ENCODE measurements at regions of chr19 and their contacts with region 1.

Region 1: DNA sequence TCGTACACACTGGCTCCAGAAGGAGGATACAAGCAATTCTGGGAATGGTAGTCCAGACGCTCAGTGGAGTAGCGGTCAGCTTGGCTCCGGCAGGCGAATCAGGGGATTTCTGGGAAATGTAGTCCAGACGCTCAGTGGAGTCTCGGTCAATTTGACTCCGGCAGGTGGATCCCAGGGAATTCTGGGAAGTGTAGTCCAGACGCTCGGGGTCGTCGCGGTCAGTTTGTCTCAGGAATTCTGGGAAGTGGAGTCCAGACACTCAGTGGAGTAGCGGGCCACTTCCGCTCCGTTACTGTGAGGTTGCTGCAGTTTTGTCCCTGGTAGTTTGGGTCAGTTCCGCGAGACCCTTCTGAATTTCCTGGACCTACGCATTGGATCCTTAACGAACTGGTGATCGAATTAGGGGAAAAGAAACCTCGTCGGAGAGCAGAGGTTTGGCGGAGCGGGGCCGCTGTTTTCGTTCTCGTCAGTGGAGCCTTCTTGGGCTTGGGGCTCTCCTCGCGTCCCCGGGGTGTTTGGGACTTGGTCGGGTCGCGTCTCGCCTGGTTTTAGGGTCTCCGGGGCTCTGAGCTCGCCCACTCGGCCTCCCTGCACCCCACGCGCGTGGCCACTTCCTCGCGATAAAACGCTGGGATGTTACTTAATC is at the start of gene ZNF225:
- DNase-seq: peak; percentile 64 to 95 (median 83)
- ATAC-seq: peak; percentile 97
- H3K4me3 ChIP-seq: peak within 1 kb of the TSS; percentile 80 to 92
- H3K4me3 Mint-ChIP-seq: peak within 1 kb of the TSS; percentile 99
- H3K27ac ChIP-seq: peak within 1 kb of the TSS; percentile 40 to 64
- H3K27ac Mint-ChIP-seq: peak within 1 kb of the TSS; percentile 93
- H3K4me1 ChIP-seq: peaks cover 14% of the 10 kb centered on the region
- H3K4me1 Mint-ChIP-seq: peaks cover 34% of the 10 kb centered on the region
- H3K27me3 ChIP-seq: no peaks in the 10 kb centered on the region
- H3K27me3 Mint-ChIP-seq: no peaks in the 10 kb centered on the region
- CTCF ChIP-seq: no peak
- total RNA-seq, gene ZNF225: 1.3 to 1.6 TPM

Region 2: GRCh38 chr19:43826787-43827754 is 286.2 kb before region 1 on chr19 and contains the start of gene ZNF283:
- CTCF ChIA-PET with region 1: no interaction called
- POLR2A ChIA-PET with region 1: no interaction called
- intact Hi-C with region 1: loop called (anchors 1 to 2 kb)
- DNase-seq: peak; percentile 64 to 90 (median 81)
- ATAC-seq: peak; percentile 92
- H3K4me3 ChIP-seq: peak within 1 kb of the TSS; percentile 52 to 69
- H3K4me3 Mint-ChIP-seq: peak within 1 kb of the TSS; percentile 88
- H3K27ac ChIP-seq: no peak within 1 kb of the TSS
- H3K27ac Mint-ChIP-seq: peak within 1 kb of the TSS; percentile 39
- H3K4me1 ChIP-seq: peaks cover 12% of the 10 kb centered on the region
- H3K4me1 Mint-ChIP-seq: peaks cover 22% of the 10 kb centered on the region
- H3K27me3 ChIP-seq: no peaks in the 10 kb centered on the region
- H3K27me3 Mint-ChIP-seq: peaks cover 8% of the 10 kb centered on the region
- CTCF ChIP-seq: no peak
- total RNA-seq, gene ZNF283: 1.3 to 1.4 TPM

Region 3: DNA sequence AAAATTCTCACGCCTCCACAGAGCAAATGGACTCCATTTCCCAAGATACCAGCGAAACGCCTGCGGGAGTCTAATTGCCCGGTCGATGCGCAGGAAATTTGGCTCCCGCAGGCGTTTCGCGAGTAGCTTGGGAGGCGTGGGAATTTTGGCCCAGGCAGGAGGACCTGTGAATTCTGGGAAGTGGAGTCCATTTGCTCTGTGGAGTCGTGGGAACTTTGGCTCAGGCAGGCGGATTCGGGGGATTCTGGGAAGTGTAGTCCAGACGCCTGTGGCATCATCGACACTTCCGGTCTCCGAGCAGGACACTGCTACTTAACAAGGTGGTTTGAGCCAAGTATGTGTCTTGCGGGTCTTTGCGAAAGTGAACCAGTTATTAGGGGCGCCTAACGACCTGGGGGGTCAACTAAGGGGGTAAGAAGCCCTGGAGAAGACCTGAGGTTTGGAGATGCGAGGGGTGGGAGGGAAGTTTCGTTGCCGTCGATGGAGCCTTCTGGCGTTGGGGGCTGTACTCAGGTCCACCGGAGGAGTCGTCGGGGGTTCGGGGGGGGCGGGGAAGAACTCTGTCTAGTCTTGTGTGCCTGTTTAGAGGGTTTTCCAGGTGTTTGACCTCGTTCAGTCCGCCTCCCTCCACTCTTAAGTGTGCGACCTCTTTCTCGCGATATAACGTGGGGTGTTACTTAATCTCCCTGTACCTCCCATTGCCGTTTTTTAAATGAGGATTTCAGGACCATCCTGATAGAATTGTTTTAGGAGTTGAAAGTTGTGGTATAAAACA is 129.2 kb before region 1 on chr19 and contains the start of gene ZNF155:
- CTCF ChIA-PET with region 1: no interaction called
- POLR2A ChIA-PET with region 1: no interaction called
- intact Hi-C with region 1: no loop called
- DNase-seq: peak; percentile 28 to 89 (median 64)
- ATAC-seq: peak; percentile 86
- H3K4me3 ChIP-seq: peak within 1 kb of the TSS; percentile 76 to 92
- H3K4me3 Mint-ChIP-seq: peak within 1 kb of the TSS; percentile 96
- H3K27ac ChIP-seq: peak within 1 kb of the TSS; percentile 61 to 65
- H3K27ac Mint-ChIP-seq: peak within 1 kb of the TSS; percentile 92
- H3K4me1 ChIP-seq: no peaks in the 10 kb centered on the region
- H3K4me1 Mint-ChIP-seq: peaks cover 15% of the 10 kb centered on the region
- H3K27me3 ChIP-seq: no peaks in the 10 kb centered on the region
- H3K27me3 Mint-ChIP-seq: no peaks in the 10 kb centered on the region
- CTCF ChIP-seq: no peak
- total RNA-seq, gene ZNF155: 3.4 to 3.5 TPM

Region 4: GRCh38 chr19:44025217-44025936 is 87.9 kb before region 1 on chr19 and contains the start of gene ZNF222:
- CTCF ChIA-PET with region 1: no interaction called
- POLR2A ChIA-PET with region 1: no interaction called
- intact Hi-C with region 1: loop called in 1 of 2 experiments (anchors 1 kb)
- DNase-seq: peak; percentile 34 to 89 (median 75)
- ATAC-seq: peak; percentile 97
- H3K4me3 ChIP-seq: peak within 1 kb of the TSS; percentile 84 to 92
- H3K4me3 Mint-ChIP-seq: peak within 1 kb of the TSS; percentile 95
- H3K27ac ChIP-seq: peak within 1 kb of the TSS; percentile 47 to 61
- H3K27ac Mint-ChIP-seq: peak within 1 kb of the TSS; percentile 91
- H3K4me1 ChIP-seq: peaks cover 12% of the 10 kb centered on the region
- H3K4me1 Mint-ChIP-seq: peaks cover 30% of the 10 kb centered on the region
- H3K27me3 ChIP-seq: no peaks in the 10 kb centered on the region
- H3K27me3 Mint-ChIP-seq: peaks cover 1% of the 10 kb centered on the region
- CTCF ChIP-seq: no peak
- total RNA-seq, gene ZNF222: 7.7 TPM

Region 5: DNA sequence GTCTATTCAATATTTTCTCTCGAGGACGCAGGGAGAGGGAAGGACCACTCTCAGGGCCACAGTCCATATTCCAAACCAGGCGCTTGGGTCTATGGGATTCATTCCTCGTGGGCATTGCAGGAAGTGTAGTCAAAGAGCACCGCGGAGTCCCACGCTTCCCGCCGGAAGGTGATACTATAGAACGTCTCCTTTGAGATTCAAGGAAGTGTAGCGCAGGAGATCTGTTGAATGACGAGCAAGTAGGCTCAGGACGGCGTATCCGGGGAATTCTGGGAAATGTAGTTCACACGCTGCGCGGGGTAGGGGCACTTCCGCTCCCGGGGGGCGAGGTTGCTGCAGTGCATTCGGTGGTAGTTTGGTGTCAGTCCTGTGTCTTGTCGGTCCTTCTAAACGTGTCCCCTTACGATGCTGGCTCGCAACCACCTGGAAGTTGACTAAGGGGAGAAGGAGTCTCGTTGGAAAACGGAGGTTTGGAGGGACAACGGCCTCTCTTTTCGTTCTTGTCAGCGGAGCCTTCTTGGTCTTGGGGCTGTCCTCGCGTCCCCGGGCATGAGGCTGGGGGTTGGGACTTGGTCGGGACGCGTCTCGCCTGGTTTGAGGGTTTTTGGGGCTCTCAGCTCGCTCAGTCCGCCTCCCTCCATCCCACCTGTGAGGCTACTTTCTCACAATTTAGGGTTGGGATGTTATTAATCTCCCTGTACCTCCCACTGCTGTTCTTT is 41.3 kb before region 1 on chr19 and contains the start of gene ZNF284:
- CTCF ChIA-PET with region 1: no interaction called
- POLR2A ChIA-PET with region 1: no interaction called
- intact Hi-C with region 1: loop called in 1 of 2 experiments (anchors 1 kb)
- DNase-seq: peak; percentile 60 to 93 (median 83)
- ATAC-seq: peak; percentile 99
- H3K4me3 ChIP-seq: peak within 1 kb of the TSS; percentile 65 to 73
- H3K4me3 Mint-ChIP-seq: peak within 1 kb of the TSS; percentile 91
- H3K27ac ChIP-seq: peak within 1 kb of the TSS; percentile 2 to 59
- H3K27ac Mint-ChIP-seq: peak within 1 kb of the TSS; percentile 79
- H3K4me1 ChIP-seq: peaks cover 16% of the 10 kb centered on the region
- H3K4me1 Mint-ChIP-seq: peaks cover 36% of the 10 kb centered on the region
- H3K27me3 ChIP-seq: no peaks in the 10 kb centered on the region
- H3K27me3 Mint-ChIP-seq: no peaks in the 10 kb centered on the region
- CTCF ChIP-seq: no peak
- total RNA-seq, gene ZNF284: 0.64 to 1.2 TPM

Region 6: DNA sequence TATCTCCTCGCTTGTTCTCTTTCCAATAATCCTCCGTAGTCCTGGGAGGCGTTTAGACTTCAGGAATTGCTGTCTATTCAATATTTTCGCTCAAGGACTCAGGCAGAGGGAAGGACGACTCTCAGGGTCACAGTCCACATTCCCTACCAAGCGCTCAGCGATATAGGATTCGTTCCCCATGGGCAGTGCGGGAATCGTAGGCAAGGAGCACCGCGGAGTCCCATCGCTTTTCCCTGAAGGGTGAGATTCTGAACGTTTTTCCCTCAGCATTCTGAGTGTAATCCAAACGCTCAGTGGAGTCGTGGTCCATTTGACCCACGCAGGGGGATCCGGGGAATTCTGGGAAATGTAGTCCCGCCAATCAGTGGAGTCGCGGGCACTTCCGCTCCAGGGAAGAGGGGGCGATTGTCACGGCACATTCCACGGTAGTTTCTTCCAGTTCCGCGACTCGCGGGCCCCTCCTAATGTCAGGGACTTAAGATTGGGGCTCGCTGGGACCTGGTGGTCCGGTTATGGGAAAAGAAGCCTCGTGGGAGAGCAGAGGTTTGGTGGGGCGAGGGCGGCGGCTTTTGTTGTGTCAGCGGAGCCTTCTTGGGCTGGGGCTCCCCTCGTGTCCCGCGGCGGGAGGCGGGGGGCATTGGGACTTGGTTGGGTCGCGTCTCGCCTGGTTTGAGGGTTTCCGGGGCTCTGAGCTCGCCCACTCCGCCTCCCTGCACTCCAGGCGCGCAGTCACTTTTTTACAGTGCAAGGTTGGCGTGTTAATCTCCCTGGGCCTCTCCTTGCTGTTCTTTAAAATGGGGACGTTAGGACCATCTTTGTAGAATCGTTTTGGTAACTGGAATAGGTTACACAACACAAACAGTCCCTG is 28.2 kb after region 1 on chr19 and contains the start of gene ZNF234:
- CTCF ChIA-PET with region 1: no interaction called
- POLR2A ChIA-PET with region 1: no interaction called
- intact Hi-C with region 1: loop called (anchors 1 kb)
- DNase-seq: peak; percentile 22 to 86 (median 68)
- ATAC-seq: peak; percentile 93
- H3K4me3 ChIP-seq: peak within 1 kb of the TSS; percentile 77 to 82
- H3K4me3 Mint-ChIP-seq: peak within 1 kb of the TSS; percentile 96
- H3K27ac ChIP-seq: peak within 1 kb of the TSS; percentile 34 to 76
- H3K27ac Mint-ChIP-seq: peak within 1 kb of the TSS; percentile 85
- H3K4me1 ChIP-seq: peaks cover 17% of the 10 kb centered on the region
- H3K4me1 Mint-ChIP-seq: peaks cover 25% of the 10 kb centered on the region
- H3K27me3 ChIP-seq: no peaks in the 10 kb centered on the region
- H3K27me3 Mint-ChIP-seq: no peaks in the 10 kb centered on the region
- CTCF ChIP-seq: no peak
- total RNA-seq, gene ZNF234: 2.2 to 2.4 TPM

Region 7: DNA sequence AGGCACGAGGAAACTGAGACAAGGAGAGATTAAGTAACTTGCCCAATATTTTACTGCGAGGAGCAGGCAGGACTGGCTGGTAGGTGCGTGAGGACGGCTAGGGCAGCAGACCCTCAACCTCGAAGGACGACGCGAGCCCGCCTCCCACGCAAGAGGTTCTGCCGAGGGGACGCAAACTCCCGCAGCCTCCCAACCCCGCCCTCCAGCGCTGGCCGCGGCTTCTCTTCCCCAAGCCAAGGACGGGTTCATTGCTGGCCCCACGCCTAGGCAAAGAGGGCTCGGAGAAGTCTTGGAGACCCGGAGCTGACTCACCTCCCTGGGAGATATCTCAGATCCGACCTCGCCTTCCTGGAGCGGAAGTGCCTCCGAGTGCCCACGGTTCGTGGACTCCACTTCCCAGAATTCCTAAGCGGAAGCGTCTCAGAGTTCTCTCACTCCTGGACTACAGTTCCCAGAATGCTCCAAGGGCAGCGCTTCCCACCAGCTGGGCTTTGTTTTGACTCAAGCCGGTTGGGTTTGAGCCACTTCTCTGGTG is 191.5 kb after region 1 on chr19 and contains the start of gene ZNF235:
- CTCF ChIA-PET with region 1: no interaction called
- POLR2A ChIA-PET with region 1: no interaction called
- intact Hi-C with region 1: loop called (anchors 1 kb)
- DNase-seq: peak; percentile 22 to 89 (median 70)
- ATAC-seq: peak; percentile 96
- H3K4me3 ChIP-seq: peak within 1 kb of the TSS; percentile 75 to 77
- H3K4me3 Mint-ChIP-seq: peak within 1 kb of the TSS; percentile 94
- H3K27ac ChIP-seq: peak within 1 kb of the TSS; percentile 26 to 52
- H3K27ac Mint-ChIP-seq: peak within 1 kb of the TSS; percentile 85
- H3K4me1 ChIP-seq: peaks cover 15% of the 10 kb centered on the region
- H3K4me1 Mint-ChIP-seq: peaks cover 35% of the 10 kb centered on the region
- H3K27me3 ChIP-seq: no peaks in the 10 kb centered on the region
- H3K27me3 Mint-ChIP-seq: peaks cover 7% of the 10 kb centered on the region
- CTCF ChIP-seq: no peak
- total RNA-seq, gene ZNF235: 2.6 to 3.7 TPM

Region 8: DNA sequence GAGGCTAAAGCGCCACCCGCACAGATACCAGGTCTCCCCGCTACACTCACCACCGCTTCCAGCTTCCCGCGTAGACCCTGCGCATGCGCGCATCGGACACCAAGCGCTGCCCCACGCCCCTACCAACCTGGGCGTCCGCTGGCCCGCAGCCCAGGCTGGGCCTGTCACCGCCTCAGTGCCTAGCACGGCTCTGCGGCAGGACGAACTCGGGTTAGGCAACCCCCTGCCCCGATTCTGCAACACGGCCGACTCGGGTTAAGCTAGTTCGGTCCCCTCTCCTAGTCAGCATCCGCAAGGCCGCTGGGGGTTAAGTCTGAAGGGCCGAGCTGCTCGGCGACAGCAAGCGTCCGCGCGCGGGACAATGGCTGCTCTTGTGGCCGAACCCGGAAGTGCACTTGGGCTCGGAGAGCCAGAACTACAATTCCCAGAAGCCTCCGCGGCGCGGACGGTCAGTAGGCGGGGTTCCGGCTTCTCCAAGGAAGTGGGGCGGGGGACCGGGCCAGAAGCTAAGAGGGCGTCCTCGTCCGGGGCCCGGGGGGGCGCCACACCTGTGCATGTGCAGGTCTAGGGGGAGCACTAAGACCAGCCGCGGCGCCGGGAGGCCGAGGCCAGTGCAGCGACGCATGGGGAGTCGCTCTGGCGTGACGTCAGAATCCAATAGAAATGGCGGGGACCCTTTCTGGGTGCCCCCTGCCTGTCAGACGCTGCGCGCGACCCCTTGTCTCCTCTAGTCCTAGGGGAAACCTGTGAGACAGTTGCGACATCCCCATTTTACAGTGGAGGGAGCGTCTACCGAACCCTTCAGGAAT is 387.1 kb after region 1 on chr19 and contains the start of gene ZNF180:
- CTCF ChIA-PET with region 1: no interaction called
- POLR2A ChIA-PET with region 1: no interaction called
- intact Hi-C with region 1: loop called in 1 of 2 experiments (anchors 1 kb)
- DNase-seq: peak; percentile 89 to 98 (median 96)
- ATAC-seq: peak; percentile 96
- H3K4me3 ChIP-seq: peak within 1 kb of the TSS; percentile 86 to 90
- H3K4me3 Mint-ChIP-seq: peak within 1 kb of the TSS; percentile 92
- H3K27ac ChIP-seq: peak within 1 kb of the TSS; percentile 60 to 77
- H3K27ac Mint-ChIP-seq: peak within 1 kb of the TSS; percentile 92
- H3K4me1 ChIP-seq: peaks cover 21% of the 10 kb centered on the region
- H3K4me1 Mint-ChIP-seq: peaks cover 34% of the 10 kb centered on the region
- H3K27me3 ChIP-seq: no peaks in the 10 kb centered on the region
- H3K27me3 Mint-ChIP-seq: peaks cover 10% of the 10 kb centered on the region
- CTCF ChIP-seq: peak; percentile 35
- total RNA-seq, gene ZNF180: 8.5 to 8.8 TPM